Left ventricle myocardium inferior (tissue), 1 donor: ENCODE measurements at regions of chr12 and their contacts with region 1.

Region 1: DNA sequence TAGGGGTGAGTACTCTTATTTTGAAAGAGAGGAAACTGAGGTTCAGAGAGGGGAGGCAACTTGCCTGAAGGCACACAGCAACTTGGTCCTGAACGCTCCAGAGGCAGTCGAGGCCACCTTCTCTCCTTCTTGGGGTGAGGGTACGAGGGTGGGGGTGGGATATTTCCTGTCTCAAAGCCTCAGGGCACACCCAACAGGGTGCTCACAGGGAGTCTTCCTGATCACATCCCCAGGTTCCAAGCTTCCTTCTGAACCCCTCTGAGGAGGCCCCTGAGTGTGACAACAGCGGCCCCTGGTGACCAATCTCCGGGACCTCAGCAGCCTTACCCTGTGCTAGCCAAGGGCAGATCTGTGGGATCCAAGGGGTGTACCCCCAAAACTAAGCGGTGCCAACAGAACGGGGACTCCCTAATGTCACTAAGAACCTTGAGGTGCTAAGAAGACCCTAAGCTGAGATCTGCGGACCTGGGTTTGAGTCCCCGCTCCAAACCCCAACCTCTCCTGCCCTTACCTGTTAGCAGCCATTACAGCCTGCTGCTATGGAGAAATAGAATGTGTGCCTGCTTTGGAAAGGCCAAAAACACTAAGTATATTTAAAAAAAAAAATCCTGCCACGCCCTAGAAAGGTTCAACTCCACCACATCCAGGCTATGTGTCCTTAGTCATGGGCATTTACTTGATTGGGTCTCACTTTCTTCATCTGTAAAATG is 57.9 kb downstream of the TRPV4 start:
- DNase-seq: peak; percentile 73
- H3K4me3 ChIP-seq: no peak overlapping the region
- H3K27ac ChIP-seq: no peak overlapping the region
- H3K4me1 ChIP-seq: peaks cover 23% of the 10 kb centered on the region
- H3K27me3 ChIP-seq: no peaks in the 10 kb centered on the region
- CTCF ChIP-seq: peak; percentile 93

Region 2: GRCh38 chr12:109421355-109422087 is 353.8 kb before region 1 on chr12:
- intact Hi-C with region 1: loop called (anchors 5 kb)
- DNase-seq: no peak
- H3K4me3 ChIP-seq: no peak overlapping the region
- H3K27ac ChIP-seq: no peak overlapping the region
- H3K4me1 ChIP-seq: no peaks in the 10 kb centered on the region
- H3K27me3 ChIP-seq: peaks cover 34% of the 10 kb centered on the region
- CTCF ChIP-seq: no peak

Region 3: GRCh38 chr12:109518820-109519665 is 256.3 kb before region 1 on chr12:
- intact Hi-C with region 1: loop called (anchors 10 kb)
- DNase-seq: peak; percentile 59
- H3K4me3 ChIP-seq: no peak overlapping the region
- H3K27ac ChIP-seq: peak overlapping the region; percentile 88
- H3K4me1 ChIP-seq: peaks cover 63% of the 10 kb centered on the region
- H3K27me3 ChIP-seq: no peaks in the 10 kb centered on the region
- CTCF ChIP-seq: peak; percentile 90

Region 4: DNA sequence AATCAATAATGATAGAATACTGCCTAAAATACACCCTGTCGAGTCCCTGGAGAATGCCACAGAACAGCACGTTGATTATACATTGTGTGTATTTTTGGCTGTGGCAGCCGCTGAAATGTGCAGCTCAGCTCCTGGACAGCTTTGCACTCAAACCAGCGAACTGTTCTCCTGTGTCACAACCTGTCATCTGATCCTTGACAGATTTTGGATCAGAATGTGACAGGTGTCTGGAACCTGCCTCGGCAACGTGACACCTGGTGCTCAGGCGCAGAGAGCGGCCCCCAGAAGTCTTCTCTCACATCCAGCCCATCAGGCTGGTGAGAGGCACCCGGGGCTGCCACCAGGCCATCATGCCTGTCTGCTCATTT is 182.4 kb before region 1 on chr12:
- intact Hi-C with region 1: loop called (anchors 5 kb)
- DNase-seq: peak; percentile 26
- H3K4me3 ChIP-seq: no peak overlapping the region
- H3K27ac ChIP-seq: peak overlapping the region; percentile 83
- H3K4me1 ChIP-seq: peaks cover 20% of the 10 kb centered on the region
- H3K27me3 ChIP-seq: no peaks in the 10 kb centered on the region
- CTCF ChIP-seq: no peak

Region 5: DNA sequence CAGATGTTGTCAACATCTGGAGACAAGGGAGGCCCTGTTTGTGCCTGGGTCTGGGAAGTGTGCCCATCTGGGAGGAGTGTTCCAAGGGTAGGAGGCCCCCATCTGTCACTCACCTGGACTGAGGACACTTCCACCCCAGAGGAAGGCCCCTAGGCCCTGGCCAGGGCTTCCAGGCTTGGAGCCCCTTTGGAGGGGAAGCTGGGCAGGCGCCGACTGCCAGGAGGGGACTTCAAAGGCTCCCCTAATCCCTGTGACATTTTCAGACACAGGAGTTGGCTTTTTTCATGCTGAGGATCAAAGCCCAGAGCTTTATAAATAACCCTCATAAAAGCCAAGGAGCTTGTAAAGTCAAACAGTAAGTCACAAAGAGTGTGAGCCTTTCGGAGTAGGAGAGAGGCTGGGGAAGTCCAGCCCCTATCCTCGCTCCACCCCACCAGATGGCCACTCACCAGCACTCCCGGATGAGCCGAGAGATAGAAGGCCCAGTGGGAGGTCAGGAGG is 79.3 kb before region 1 on chr12:
- intact Hi-C with region 1: no loop called
- DNase-seq: no peak
- H3K4me3 ChIP-seq: no peak overlapping the region
- H3K27ac ChIP-seq: no peak overlapping the region
- H3K4me1 ChIP-seq: peaks cover 7% of the 10 kb centered on the region
- H3K27me3 ChIP-seq: peaks cover 16% of the 10 kb centered on the region
- CTCF ChIP-seq: no peak

Region 6: GRCh38 chr12:109828236-109828550 is 52.9 kb after region 1 on chr12:
- intact Hi-C with region 1: no loop called
- DNase-seq: peak; percentile 61
- H3K4me3 ChIP-seq: no peak overlapping the region
- H3K27ac ChIP-seq: peak overlapping the region; percentile 39
- H3K4me1 ChIP-seq: peaks cover 5% of the 10 kb centered on the region
- H3K27me3 ChIP-seq: peaks cover 34% of the 10 kb centered on the region
- CTCF ChIP-seq: no peak